ENCODE measurements at regions of chr20 and their contacts with region 1.

Region 1: DNA sequence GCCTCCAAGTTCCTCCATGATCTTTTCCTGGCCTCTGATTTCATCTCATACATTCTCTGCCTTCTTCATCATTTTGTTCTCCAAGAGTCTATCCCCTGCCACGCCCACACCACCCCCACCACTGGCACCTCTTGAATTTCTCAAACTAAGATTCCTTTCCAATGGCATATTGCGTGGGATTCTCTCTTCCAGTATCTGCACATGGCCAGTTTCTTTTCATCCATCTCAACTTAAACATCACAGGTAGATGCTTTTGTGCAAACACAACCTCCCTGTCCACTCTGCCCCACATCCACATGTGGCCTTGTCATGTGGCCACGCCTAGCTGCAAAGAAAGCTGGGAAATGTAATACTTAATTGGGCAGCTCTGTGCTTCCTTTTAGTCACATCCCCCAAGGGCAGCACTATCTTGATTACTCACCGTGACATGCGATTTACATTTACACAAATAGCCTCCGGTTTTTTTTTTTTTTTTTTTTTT is 33.4 kb upstream of the ZMYND8 start:
- DNase-seq: peak in 1 of 14 experiments; percentile 33
- ATAC-seq: no peak
- H3K4me3 ChIP-seq: no peak overlapping the region
- H3K4me3 Mint-ChIP-seq: no peak overlapping the region
- H3K27ac ChIP-seq: no peak overlapping the region
- H3K27ac Mint-ChIP-seq: no peak overlapping the region
- H3K4me1 ChIP-seq: no peaks in the 10 kb centered on the region
- H3K4me1 Mint-ChIP-seq: no peaks in the 10 kb centered on the region
- H3K27me3 ChIP-seq: no peaks in the 10 kb centered on the region
- H3K27me3 Mint-ChIP-seq: no peaks in the 10 kb centered on the region
- CTCF ChIP-seq: no peak

Region 2: DNA sequence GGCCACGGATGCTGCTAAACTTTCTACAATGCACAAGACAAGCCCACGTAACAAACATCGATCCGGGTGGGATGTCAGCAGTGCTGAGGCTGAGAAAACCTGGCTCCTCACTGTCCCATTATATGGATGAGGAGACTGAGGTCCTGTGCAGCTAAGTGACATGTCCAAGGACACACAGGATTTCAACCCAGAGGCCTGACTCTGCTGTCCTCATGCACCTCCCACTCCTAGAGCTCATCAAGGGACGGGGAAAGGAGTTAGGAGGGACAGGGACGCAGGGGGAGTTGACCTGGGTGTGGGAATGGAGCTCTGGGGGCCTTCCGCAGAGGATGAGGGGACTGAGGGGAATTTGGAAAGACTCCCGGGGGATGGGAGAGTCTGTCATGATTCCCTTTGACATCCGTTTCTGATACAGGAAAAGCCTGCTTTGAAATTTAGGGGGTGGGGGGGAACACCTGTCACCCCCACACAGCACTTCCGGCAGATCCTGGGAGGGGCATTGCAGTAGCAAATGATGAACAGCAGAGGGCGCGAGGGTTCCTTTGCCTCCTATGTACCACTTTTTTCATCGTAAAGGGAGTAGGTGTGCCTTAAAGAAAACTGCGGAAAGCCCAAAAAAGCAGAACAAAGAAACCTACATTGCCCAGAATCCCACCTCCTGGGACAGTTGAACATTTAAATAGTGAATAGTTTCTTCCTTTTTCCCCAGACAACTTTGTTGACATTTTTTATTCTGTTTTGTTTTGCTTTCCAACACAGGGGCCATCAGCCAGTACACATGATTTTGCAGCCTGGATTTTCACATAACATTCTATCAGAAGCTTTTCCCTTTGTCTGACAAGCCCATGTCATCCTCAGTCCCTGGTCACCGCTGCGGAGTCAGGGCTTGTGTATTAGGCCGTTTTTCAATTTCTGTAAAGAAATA is 631.9 kb before region 1 on chr20:
- CTCF ChIA-PET with region 1: no interaction called
- POLR2A ChIA-PET with region 1: no interaction called
- intact Hi-C with region 1: loop called in 1 of 2 experiments (anchors 10 kb)
- DNase-seq: peak; percentile 16 to 76 (median 34)
- ATAC-seq: peak; percentile 68
- H3K4me3 ChIP-seq: no peak overlapping the region
- H3K4me3 Mint-ChIP-seq: no peak overlapping the region
- H3K27ac ChIP-seq: no peak overlapping the region
- H3K27ac Mint-ChIP-seq: no peak overlapping the region
- H3K4me1 ChIP-seq: peaks cover 9% of the 10 kb centered on the region
- H3K4me1 Mint-ChIP-seq: peaks cover 5% of the 10 kb centered on the region
- H3K27me3 ChIP-seq: peaks cover 0 to 3% of the 10 kb centered on the region in 2 experiments
- H3K27me3 Mint-ChIP-seq: peaks cover 19% of the 10 kb centered on the region
- CTCF ChIP-seq: peak; percentile 72

Region 3: DNA sequence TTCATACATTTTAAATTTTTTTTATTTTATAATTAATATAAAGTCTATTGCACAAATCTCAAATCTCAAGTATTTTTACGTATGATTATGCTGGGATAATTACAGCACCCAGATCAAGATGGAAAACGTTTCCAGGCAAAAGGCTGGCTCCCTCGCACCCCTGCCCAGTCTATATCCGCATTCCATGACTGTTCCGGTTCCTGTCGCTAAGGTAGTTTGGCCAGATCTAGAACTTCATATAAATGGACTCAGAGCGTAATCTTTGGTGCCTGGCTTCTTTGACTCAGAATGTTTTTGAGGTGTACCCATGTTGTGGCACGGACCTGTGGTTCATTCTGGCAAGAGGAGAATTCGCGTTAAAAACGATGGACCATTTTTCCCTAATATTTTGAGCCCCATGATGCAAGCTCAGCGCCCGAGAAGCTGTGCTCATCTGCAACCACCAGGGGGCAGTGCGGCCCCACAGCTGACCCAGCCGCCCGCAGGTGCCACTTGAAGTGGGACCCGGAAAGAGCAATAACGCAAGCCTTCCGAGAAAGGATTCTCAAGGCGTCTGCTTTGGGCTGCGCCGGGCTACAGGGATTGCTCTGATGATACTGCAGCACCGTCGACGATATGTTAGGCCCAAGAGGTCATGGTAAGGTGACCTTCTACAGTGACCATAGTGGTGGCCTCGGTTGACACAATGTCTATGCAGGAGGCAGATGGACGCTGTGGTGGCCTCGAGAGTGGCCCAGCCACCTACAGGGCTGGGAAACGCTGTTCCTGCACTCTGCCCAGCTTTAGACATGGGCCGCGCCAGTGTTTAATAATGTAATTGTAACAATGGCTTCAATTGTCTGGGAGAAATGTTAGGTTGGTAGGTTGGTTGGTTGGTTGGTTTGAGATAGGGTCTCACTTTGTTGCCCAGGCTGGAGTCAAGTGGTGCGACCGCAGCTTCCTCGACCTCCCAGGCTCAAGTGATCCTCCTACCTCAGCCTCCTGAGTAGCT is 193.5 kb before region 1 on chr20:
- CTCF ChIA-PET with region 1: no interaction called
- POLR2A ChIA-PET with region 1: no interaction called
- intact Hi-C with region 1: loop called in 1 of 2 experiments (anchors 2 kb)
- DNase-seq: peak; percentile 44 to 81 (median 66)
- ATAC-seq: peak; percentile 74
- H3K4me3 ChIP-seq: no peak overlapping the region
- H3K4me3 Mint-ChIP-seq: no peak overlapping the region
- H3K27ac ChIP-seq: no peak overlapping the region
- H3K27ac Mint-ChIP-seq: no peak overlapping the region
- H3K4me1 ChIP-seq: peaks cover 5% of the 10 kb centered on the region
- H3K4me1 Mint-ChIP-seq: no peaks in the 10 kb centered on the region
- H3K27me3 ChIP-seq: no peaks in the 10 kb centered on the region
- H3K27me3 Mint-ChIP-seq: peaks cover 3% of the 10 kb centered on the region
- CTCF ChIP-seq: peak; percentile 98

Region 4: DNA sequence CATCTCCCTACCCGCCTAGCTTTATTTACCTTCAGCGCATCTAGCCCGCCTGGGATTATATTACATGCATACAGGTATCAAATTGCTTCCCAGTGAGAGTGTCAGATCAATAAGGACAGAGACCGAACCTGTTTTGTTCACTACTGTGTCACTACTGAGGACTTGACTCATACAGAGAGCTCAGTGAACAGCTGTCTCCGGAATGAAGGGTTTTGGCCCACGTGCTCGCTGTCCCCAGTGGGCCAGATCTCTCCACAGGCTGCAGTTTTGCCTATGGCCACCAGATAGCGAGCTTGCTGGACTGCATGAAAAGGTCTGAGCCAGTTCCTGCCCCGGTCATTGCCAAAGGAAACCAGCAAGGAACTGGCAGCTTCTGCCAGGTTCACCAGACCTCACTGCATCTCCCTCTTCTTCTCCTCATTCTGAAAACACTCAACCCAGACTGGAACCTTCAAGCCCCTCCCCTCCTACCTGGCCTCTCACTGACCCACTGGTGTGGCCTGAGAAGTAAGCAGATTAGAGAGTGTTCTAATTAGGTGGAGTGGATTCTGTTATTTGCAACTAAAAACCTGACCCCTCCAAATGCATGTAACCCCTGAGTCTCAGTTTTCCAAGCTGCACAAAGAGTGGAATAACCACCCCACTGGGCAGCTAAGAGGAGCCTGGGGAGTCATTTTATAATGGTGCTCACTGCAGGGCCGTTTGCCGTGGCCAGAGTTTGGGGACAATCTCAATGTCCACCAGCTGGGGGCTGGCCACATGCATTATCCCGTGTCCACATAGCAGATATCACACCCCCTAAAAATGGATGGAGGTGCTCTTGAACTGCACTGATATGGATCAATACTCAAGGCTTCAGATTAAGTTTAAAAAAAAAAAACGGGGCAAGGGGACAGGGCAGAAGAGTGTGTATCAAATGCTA is 184.1 kb before region 1 on chr20:
- CTCF ChIA-PET with region 1: no interaction called
- POLR2A ChIA-PET with region 1: interaction called, 3 read pairs
- intact Hi-C with region 1: loop called in 1 of 2 experiments (anchors 2 kb)
- DNase-seq: peak in 5 of 14 experiments; percentile 27 to 68 (median 41)
- ATAC-seq: peak; percentile 70
- H3K4me3 ChIP-seq: no peak overlapping the region
- H3K4me3 Mint-ChIP-seq: no peak overlapping the region
- H3K27ac ChIP-seq: no peak overlapping the region
- H3K27ac Mint-ChIP-seq: no peak overlapping the region
- H3K4me1 ChIP-seq: no peaks in the 10 kb centered on the region
- H3K4me1 Mint-ChIP-seq: peaks cover 6% of the 10 kb centered on the region
- H3K27me3 ChIP-seq: no peaks in the 10 kb centered on the region
- H3K27me3 Mint-ChIP-seq: no peaks in the 10 kb centered on the region
- CTCF ChIP-seq: peak; percentile 75

Region 5: GRCh38 chr20:47272893-47273590 is 116.9 kb before region 1 on chr20:
- CTCF ChIA-PET with region 1: interaction called, 185 read pairs
- POLR2A ChIA-PET with region 1: interaction called, 17 read pairs
- intact Hi-C with region 1: no loop called
- DNase-seq: peak in 12 of 14 experiments; percentile 7 to 81 (median 31)
- ATAC-seq: peak; percentile 84
- H3K4me3 ChIP-seq: no peak overlapping the region
- H3K4me3 Mint-ChIP-seq: no peak overlapping the region
- H3K27ac ChIP-seq: no peak overlapping the region
- H3K27ac Mint-ChIP-seq: peak overlapping the region; percentile 52
- H3K4me1 ChIP-seq: no peaks in the 10 kb centered on the region
- H3K4me1 Mint-ChIP-seq: peaks cover 28% of the 10 kb centered on the region
- H3K27me3 ChIP-seq: no peaks in the 10 kb centered on the region
- H3K27me3 Mint-ChIP-seq: no peaks in the 10 kb centered on the region
- CTCF ChIP-seq: peak; percentile 98

Region 6: GRCh38 chr20:47356526-47357295 is 33.2 kb before region 1 on chr20 and contains the start of gene ZMYND8:
- CTCF ChIA-PET with region 1: no interaction called
- POLR2A ChIA-PET with region 1: no interaction called
- intact Hi-C with region 1: loop called in 1 of 2 experiments (anchors 2 kb)
- DNase-seq: peak; percentile 87 to 100 (median 95)
- ATAC-seq: peak; percentile 88
- H3K4me3 ChIP-seq: peak within 1 kb of the TSS; percentile 61
- H3K4me3 Mint-ChIP-seq: peak within 1 kb of the TSS; percentile 93
- H3K27ac ChIP-seq: peak within 1 kb of the TSS; percentile 83 to 85
- H3K27ac Mint-ChIP-seq: no peak within 1 kb of the TSS
- H3K4me1 ChIP-seq: peaks cover 74% of the 10 kb centered on the region
- H3K4me1 Mint-ChIP-seq: peaks cover 55% of the 10 kb centered on the region
- H3K27me3 ChIP-seq: no peaks in the 10 kb centered on the region
- H3K27me3 Mint-ChIP-seq: no peaks in the 10 kb centered on the region
- CTCF ChIP-seq: no peak
- total RNA-seq, gene ZMYND8: 33.0 to 34.3 TPM

Region 7: DNA sequence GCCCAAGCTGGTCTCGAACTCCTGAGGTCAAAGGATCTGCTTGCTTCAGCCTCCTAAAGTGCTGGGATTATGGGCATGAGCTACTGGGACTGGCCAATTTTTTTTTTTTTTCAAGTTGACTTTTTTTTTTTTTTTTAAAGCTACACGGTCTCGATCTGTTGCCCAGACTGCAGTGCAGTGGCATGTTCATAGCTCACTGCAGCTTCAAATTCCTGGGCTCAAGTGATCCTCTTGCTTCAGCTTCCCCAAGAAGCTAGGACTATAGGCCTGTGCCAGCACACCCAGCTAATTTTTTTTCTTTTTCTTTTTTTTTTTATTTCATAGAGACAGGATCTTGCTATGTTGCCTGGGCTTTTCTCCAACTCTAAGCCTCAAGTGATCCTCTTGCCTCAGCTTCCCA is 171.3 kb after region 1 on chr20:
- CTCF ChIA-PET with region 1: no interaction called
- POLR2A ChIA-PET with region 1: no interaction called
- intact Hi-C with region 1: no loop called
- DNase-seq: no peak
- ATAC-seq: no peak
- H3K4me3 ChIP-seq: no peak overlapping the region
- H3K4me3 Mint-ChIP-seq: no peak overlapping the region
- H3K27ac ChIP-seq: no peak overlapping the region
- H3K27ac Mint-ChIP-seq: no peak overlapping the region
- H3K4me1 ChIP-seq: peaks cover 30% of the 10 kb centered on the region
- H3K4me1 Mint-ChIP-seq: peaks cover 75% of the 10 kb centered on the region
- H3K27me3 ChIP-seq: no peaks in the 10 kb centered on the region
- H3K27me3 Mint-ChIP-seq: no peaks in the 10 kb centered on the region
- CTCF ChIP-seq: no peak

Region 8: DNA sequence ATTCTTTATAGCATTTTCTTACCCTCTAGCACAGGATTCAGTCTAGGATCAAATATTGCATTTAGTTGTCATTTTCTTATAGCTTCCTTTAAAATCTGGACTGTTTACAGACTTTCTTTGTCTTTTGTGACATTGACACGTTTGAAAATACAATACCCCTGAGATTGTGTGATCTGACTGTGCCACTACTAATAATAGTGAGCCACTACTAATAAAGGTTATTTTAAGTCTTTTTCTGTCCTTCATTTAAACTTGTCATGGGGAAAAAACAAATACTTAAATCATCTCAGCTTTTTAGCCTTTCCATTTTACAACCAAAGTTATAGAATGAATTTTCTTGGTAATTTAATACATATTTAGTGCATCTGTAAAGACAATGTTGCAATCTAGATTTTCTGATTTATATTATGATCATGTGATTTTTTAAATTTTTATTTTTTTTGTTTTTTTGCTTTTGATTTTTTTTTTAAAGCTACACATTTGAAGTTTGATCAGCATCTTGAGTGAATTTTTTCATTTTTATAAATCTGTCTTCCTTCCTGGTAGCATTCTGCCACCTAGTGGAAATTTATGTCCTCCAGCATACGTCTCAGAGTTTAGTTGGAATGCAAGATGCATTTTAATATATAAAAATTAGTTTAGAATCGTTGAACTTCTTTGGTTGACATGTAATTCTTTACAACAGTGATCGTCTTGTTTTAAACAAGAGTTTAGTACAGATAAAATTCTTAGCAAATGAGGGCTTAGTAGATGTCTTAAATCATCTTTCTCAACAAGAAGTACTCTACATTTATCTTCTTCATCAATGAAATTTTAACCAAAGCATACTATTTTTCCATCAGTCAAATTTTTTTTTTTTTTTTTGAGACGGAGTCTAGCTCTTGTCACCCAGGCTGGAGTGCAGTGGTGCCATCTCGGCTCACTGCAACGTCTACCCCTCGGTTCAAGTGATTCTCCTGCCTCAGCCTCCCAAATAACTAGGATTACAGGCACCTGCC is 231.2 kb after region 1 on chr20:
- CTCF ChIA-PET with region 1: interaction called, 34 read pairs
- POLR2A ChIA-PET with region 1: no interaction called
- intact Hi-C with region 1: loop called in 1 of 2 experiments (anchors 2 kb)
- DNase-seq: peak in 4 of 14 experiments; percentile 27 to 73 (median 68)
- ATAC-seq: peak; percentile 52
- H3K4me3 ChIP-seq: no peak overlapping the region
- H3K4me3 Mint-ChIP-seq: no peak overlapping the region
- H3K27ac ChIP-seq: no peak overlapping the region
- H3K27ac Mint-ChIP-seq: peak overlapping the region; percentile 25
- H3K4me1 ChIP-seq: no peaks in the 10 kb centered on the region
- H3K4me1 Mint-ChIP-seq: peaks cover 23% of the 10 kb centered on the region
- H3K27me3 ChIP-seq: no peaks in the 10 kb centered on the region
- H3K27me3 Mint-ChIP-seq: no peaks in the 10 kb centered on the region
- CTCF ChIP-seq: peak; percentile 85

Measured in CD4-positive, alpha-beta T cell (primary cell).